H1 (cell line): ENCODE measurements at regions of chr15 and their contacts with region 1.

Region 1: GRCh38 chr15:51162865-51163762 is 68.4 kb upstream of the TNFAIP8L3 start:
- DNase-seq: peak; percentile 29 to 86
- H3K4me3 ChIP-seq: no peak overlapping the region
- H3K27ac ChIP-seq: no peak overlapping the region
- H3K4me1 ChIP-seq: peaks cover 0 to 8% (median under 1%) of the 10 kb centered on the region in 4 experiments; a peak in 3 of 7 replicates
- H3K27me3 ChIP-seq: 0 out of 7 replicates have a peak, but pooled peaks cover 0 to 2% (median 0%) of the 10 kb centered on the region in 4 experiments
- CTCF ChIP-seq: peak; percentile 84 to 88 (median 87)
- EP300 ChIP-seq: no peak
- POLR2A ChIP-seq: no peak
- RAD21 ChIP-seq: peak; percentile 81 to 87

Region 2: DNA sequence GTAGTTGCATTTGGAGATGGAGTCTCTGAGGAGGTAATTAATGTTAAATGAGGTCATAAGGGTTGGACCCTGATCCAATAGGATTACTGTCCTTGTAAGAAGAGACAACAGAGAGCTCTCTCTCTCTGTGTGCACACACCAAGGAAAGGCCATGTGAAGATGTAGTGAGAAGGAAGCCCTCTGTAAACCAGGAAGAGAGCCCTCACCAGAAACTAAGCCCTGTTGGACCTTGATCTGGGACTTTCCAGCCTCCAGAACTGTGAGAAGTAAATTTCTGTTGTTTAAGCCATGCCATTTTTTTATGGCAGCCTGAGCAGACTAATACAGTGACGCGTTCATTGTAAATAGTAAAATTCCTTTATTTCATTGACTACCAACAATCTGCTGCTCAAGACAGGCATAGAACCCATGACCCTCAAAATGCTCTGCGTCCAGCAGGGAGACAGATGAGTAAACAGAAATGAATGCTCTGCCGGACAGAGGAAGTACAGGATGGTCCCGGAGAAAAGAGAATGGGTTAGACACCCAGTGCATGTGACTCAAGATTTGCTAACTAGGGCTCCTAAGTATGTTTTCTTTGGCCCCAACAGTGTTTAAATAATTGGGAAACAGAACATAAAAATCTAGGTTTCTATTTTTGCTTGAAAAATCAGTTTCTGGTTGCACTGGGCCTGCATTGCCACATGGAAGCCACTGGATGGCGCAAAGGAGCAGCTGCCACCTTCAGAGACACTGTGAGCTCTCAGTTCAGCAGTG is 30.6 kb before region 1 on chr15:
- CTCF ChIA-PET with region 1: interaction called, 71 read pairs
- POLR2A ChIA-PET with region 1: no interaction called
- DNase-seq: peak in 1 of 2 experiments; percentile 72
- H3K4me3 ChIP-seq: no peak overlapping the region
- H3K27ac ChIP-seq: no peak overlapping the region
- H3K4me1 ChIP-seq: peaks cover 0 to 3% (median 0%) of the 10 kb centered on the region in 4 experiments; a peak in 1 of 7 replicates
- H3K27me3 ChIP-seq: no peaks in the 10 kb centered on the region
- CTCF ChIP-seq: peak; percentile 88 to 97 (median 93)
- EP300 ChIP-seq: no peak
- POLR2A ChIP-seq: no peak
- RAD21 ChIP-seq: peak; percentile 75 to 80

Region 3: DNA sequence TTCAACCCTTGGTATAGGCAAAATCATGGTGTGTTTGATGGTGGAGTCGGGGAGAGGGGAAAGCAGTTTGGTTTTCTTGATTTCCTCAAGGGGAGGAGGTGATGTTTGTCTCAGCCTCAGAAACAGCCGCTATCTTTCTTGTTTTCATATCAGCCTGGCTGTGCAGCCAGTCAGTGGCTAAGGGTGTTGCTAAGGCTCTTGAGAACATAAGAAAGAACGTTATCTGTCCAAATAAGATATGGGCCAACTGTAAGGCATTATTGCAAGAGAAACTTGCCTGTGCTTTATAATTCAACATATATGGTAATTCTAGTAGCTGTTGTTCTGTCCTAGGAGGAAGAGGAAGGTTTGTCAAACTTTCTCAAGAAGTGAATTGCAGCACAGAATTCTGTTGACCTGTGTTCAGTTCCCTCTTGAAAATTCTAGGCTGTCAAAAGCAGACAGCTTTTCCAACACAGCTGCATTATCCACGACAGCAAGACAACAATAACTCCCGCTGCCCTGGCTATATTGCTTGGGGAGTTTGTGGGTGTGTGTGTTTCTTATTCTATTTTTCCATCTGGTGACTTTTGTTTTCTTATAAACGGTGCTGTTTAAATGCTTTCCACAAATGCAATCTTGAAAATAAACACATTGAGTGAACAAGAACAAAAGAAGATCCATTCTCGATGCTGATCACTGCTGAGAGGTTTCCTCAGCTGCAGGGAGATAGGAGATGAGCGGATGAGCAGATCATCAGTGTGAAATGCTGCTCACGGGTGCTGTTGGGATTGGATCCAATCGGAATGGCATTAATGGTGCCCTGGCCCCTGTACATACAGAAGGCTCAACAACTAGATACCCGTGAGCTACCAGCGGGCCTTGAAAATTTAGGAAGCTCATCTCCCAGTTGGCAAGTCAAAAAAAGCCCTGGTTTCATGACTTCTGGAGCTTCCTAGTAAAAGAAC is 22.4 kb after region 1 on chr15:
- CTCF ChIA-PET with region 1: interaction called, 25 read pairs
- POLR2A ChIA-PET with region 1: no interaction called
- DNase-seq: no peak
- H3K4me3 ChIP-seq: no peak overlapping the region
- H3K27ac ChIP-seq: no peak overlapping the region
- H3K4me1 ChIP-seq: no peaks in the 10 kb centered on the region
- H3K27me3 ChIP-seq: no peaks in the 10 kb centered on the region
- CTCF ChIP-seq: no peak
- EP300 ChIP-seq: no peak
- POLR2A ChIP-seq: no peak
- RAD21 ChIP-seq: no peak

Region 4: DNA sequence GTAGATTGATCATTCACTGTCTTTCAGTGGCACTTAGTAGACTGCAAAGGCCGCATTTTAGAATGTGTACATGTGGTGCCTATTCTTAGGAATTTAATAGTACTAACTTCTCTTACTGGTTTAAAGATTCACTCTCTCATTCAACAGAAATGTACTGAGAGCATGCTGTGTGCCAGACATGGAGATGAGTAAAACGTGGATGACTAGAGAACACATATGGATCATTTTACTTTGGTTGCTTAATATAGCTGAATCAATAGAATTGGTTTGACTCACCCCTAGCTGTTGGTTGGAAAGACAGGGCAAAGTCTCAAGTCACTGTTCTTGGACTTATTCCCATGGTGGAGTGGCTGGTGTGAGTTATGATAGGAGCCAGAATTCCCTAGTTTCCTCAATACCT is 40.7 kb after region 1 on chr15:
- CTCF ChIA-PET with region 1: interaction called, 26 read pairs
- POLR2A ChIA-PET with region 1: no interaction called
- DNase-seq: no peak
- H3K4me3 ChIP-seq: no peak overlapping the region
- H3K27ac ChIP-seq: no peak overlapping the region
- H3K4me1 ChIP-seq: no peaks in the 10 kb centered on the region
- H3K27me3 ChIP-seq: no peaks in the 10 kb centered on the region
- CTCF ChIP-seq: no peak
- EP300 ChIP-seq: no peak
- POLR2A ChIP-seq: no peak
- RAD21 ChIP-seq: no peak

Region 5: DNA sequence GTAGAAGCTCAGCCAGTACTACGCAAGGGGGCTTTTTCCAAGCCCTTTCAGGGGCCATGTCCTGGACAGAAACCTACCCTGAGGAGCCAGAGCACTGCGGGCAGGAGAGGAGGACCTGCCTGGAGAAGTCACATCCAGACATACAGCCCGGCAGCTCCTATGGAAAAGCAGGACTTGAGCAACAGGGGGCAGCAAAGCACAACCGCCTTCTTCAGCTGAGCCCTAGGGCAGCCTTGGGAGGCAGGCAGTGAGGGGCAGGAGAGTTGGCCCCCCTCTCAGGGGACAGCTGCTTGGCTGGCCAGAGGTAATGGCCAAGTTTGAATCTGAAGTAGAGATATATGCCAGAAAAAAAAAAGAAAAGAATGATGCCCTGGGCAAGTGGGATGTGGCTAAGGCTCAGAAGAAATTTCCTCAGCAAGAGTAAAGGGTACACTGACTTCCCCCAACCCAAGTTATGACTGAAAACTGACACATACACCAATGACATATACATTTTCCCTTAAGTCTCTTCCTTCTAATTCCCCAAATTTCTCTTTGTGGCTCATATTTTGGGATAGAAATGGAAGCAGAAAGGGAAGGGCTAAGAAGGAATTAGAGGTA is 118.4 kb after region 1 on chr15:
- CTCF ChIA-PET with region 1: interaction called, 22 read pairs
- POLR2A ChIA-PET with region 1: no interaction called
- DNase-seq: peak in 1 of 2 experiments; percentile 79
- H3K4me3 ChIP-seq: no peak overlapping the region
- H3K27ac ChIP-seq: no peak overlapping the region
- H3K4me1 ChIP-seq: no peaks in the 10 kb centered on the region
- H3K27me3 ChIP-seq: no peaks in the 10 kb centered on the region
- CTCF ChIP-seq: peak; percentile 80 to 83 (median 81)
- EP300 ChIP-seq: no peak
- POLR2A ChIP-seq: no peak
- RAD21 ChIP-seq: peak; percentile 80 to 86

Region 6: GRCh38 chr15:51390966-51391432 is 227.9 kb after region 1 on chr15:
- CTCF ChIA-PET with region 1: interaction called, 16 read pairs
- POLR2A ChIA-PET with region 1: no interaction called
- DNase-seq: peak in 1 of 2 experiments; percentile 62
- H3K4me3 ChIP-seq: no peak overlapping the region
- H3K27ac ChIP-seq: no peak overlapping the region
- H3K4me1 ChIP-seq: peaks cover 6 to 14% (median 10%) of the 10 kb centered on the region in 4 experiments; a peak in 6 of 7 replicates
- H3K27me3 ChIP-seq: no peaks in the 10 kb centered on the region
- CTCF ChIP-seq: no peak
- EP300 ChIP-seq: no peak
- POLR2A ChIP-seq: no peak
- RAD21 ChIP-seq: no peak

Region 7: GRCh38 chr15:51443282-51443914 is 280.3 kb after region 1 on chr15:
- CTCF ChIA-PET with region 1: no interaction called
- POLR2A ChIA-PET with region 1: no interaction called
- DNase-seq: no peak
- H3K4me3 ChIP-seq: no peak overlapping the region
- H3K27ac ChIP-seq: no peak overlapping the region
- H3K4me1 ChIP-seq: no peaks in the 10 kb centered on the region
- H3K27me3 ChIP-seq: no peaks in the 10 kb centered on the region
- CTCF ChIP-seq: no peak
- EP300 ChIP-seq: no peak
- POLR2A ChIP-seq: no peak
- RAD21 ChIP-seq: no peak